Activated B cell treated with CpG ODN at 0.5 μM for 24 hours (primary cell): ENCODE measurements at regions of chr1 and their contacts with region 1.

Region 1: GRCh38 chr1:20493839-20494608 is 8.0 kb upstream of the CAMK2N1 start:
- DNase-seq: peak; percentile 79
- ATAC-seq: peak; percentile 96
- H3K4me3 Mint-ChIP-seq: no peak overlapping the region
- H3K27ac Mint-ChIP-seq: no peak overlapping the region
- H3K4me1 Mint-ChIP-seq: peaks cover 4% of the 10 kb centered on the region
- H3K27me3 Mint-ChIP-seq: peaks cover 4% of the 10 kb centered on the region
- CTCF ChIP-seq: peak; percentile 95

Region 2: GRCh38 chr1:18820791-18821641 is 1673.0 kb before region 1 on chr1:
- CTCF ChIA-PET with region 1: no interaction called
- POLR2A ChIA-PET with region 1: no interaction called
- intact Hi-C with region 1: no loop called
- DNase-seq: no peak
- ATAC-seq: no peak
- H3K4me3 Mint-ChIP-seq: no peak overlapping the region
- H3K27ac Mint-ChIP-seq: no peak overlapping the region
- H3K4me1 Mint-ChIP-seq: no peaks in the 10 kb centered on the region
- H3K27me3 Mint-ChIP-seq: peaks cover 43% of the 10 kb centered on the region
- CTCF ChIP-seq: no peak

Region 3: DNA sequence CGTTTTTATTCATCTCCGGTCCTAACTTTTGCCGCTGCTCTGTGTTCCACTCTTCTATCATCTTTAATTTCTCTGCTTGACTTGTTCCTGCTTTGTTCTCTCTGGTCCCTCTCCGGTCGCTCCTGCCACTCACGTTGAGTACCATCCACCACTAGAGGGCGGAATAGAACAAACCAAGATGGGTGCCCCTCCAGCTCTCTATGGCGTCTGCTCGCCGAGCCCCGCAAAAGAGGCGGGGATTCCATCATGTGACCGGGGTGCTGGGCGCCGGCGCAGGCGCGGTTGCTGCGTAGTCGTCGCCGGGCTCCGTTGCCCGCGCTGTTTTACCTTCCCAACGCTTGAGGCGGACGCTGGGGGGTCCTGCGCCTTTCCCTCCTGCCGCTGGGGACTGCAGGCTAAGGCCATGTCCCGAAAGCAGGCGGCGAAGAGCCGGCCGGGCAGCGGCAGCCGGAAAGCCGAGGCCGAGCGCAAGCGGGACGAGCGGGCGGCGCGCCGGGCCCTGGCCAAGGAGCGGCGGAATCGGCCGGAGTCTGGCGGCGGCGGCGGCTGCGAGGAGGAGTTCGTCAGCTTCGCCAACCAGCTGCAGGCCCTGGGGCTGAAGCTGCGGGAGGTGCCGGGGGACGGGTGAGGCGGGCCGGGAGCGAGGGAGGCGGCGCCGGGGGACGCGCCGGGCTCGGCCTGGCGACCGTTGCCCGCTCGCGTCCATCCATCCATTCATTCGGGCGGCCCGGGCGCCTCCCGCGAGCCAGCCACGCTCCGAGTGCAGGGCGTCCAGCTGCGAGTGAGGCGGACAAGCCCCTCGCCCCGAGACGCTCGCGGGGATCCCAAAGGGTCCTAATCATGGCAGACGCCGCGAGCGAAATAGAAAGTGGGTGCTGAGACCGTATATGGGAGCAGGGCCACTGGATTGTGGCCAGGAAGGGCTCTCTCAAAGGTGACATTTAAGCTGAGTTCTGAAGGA is 611.6 kb before region 1 on chr1 and contains the start of gene OTUD3:
- CTCF ChIA-PET with region 1: no interaction called
- POLR2A ChIA-PET with region 1: no interaction called
- intact Hi-C with region 1: loop called (anchors 10 kb)
- DNase-seq: peak; percentile 90
- ATAC-seq: peak; percentile 96
- H3K4me3 Mint-ChIP-seq: peak within 1 kb of the TSS; percentile 87
- H3K27ac Mint-ChIP-seq: peak within 1 kb of the TSS; percentile 84
- H3K4me1 Mint-ChIP-seq: peaks cover 30% of the 10 kb centered on the region
- H3K27me3 Mint-ChIP-seq: peaks cover 5% of the 10 kb centered on the region
- CTCF ChIP-seq: peak; percentile 64
- total RNA-seq, gene OTUD3: 13.2 and 14.2 TPM in 2 replicates

Region 4: GRCh38 chr1:19974822-19975416 is 519.1 kb before region 1 on chr1:
- CTCF ChIA-PET with region 1: no interaction called
- POLR2A ChIA-PET with region 1: no interaction called
- intact Hi-C with region 1: loop called (anchors 2 kb)
- DNase-seq: no peak
- ATAC-seq: peak; percentile 50
- H3K4me3 Mint-ChIP-seq: no peak overlapping the region
- H3K27ac Mint-ChIP-seq: no peak overlapping the region
- H3K4me1 Mint-ChIP-seq: peaks cover 3% of the 10 kb centered on the region
- H3K27me3 Mint-ChIP-seq: peaks cover 16% of the 10 kb centered on the region
- CTCF ChIP-seq: no peak

Region 5: DNA sequence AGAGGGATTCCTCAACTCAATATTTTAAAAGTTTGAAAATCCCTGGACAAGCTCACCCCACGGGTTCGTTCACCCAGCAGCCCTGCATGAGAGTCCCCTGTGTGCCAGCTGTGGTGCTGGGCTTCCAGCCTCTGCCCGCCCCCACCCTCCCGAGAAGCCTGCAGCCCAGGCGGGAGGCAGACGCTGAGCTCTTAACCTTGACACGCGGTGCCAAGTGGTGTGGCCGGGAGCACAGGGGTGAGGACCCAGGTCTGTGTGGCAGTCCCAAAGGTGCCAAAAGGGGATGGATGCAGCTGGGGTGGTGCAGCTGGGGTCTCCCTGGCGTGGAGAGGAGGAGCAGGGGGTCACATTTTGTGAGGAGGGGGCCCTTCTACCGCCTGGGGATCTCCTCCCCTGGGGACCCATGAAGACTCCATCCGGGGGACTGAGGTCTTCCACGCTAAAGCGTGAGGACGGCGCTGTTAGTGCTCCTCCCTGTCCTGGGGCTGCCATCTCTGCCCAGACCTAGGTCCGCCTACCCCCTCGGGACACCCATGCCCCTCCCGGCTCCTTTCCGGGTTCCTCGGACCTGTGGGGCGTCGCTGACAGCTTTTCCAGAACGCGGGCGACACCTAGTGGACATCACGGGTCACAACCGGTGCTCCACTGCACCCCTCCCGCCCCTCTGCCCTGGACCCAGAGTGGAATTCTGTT is 342.0 kb before region 1 on chr1:
- CTCF ChIA-PET with region 1: no interaction called
- POLR2A ChIA-PET with region 1: no interaction called
- intact Hi-C with region 1: loop called (anchors 1 kb)
- DNase-seq: peak; percentile 74
- ATAC-seq: peak; percentile 98
- H3K4me3 Mint-ChIP-seq: peak overlapping the region; percentile 80
- H3K27ac Mint-ChIP-seq: no peak overlapping the region
- H3K4me1 Mint-ChIP-seq: peaks cover 9% of the 10 kb centered on the region
- H3K27me3 Mint-ChIP-seq: no peaks in the 10 kb centered on the region
- CTCF ChIP-seq: peak; percentile 65

Region 6: GRCh38 chr1:20233394-20233793 is 260.6 kb before region 1 on chr1:
- CTCF ChIA-PET with region 1: interaction called, 3 read pairs
- POLR2A ChIA-PET with region 1: no interaction called
- intact Hi-C with region 1: loop called (anchors 5 kb)
- DNase-seq: no peak
- ATAC-seq: peak; percentile 31
- H3K4me3 Mint-ChIP-seq: no peak overlapping the region
- H3K27ac Mint-ChIP-seq: no peak overlapping the region
- H3K4me1 Mint-ChIP-seq: no peaks in the 10 kb centered on the region
- H3K27me3 Mint-ChIP-seq: peaks cover 48% of the 10 kb centered on the region
- CTCF ChIP-seq: no peak

Region 7: DNA sequence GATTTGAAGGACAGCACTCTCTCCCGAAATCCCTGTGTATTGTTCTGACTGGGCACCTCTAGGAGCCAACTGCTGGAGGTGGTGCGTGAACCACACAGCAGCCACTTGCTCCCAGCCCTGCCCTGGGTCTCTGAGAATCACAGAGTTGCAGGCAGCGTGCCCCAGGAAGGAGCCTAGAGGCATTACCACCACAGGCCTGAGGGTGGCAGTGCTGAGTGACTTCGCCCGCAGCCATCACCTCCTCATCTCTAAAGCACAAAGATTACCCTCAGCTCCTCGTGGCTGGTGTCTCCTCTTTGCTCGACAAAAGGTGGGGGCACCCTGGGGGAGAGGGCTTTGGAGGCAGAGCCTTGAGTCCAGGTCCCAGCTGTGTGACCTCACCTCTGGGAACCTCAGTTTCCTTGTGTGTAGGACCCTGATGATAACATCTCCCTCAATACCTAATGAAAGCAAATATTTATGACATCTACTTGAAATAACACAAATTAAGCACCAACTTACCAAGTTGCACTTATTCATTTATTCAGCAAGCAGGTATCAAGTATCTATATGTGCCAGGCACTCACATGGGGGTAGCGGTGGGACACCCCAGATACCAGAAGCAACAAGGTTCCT is 117.0 kb before region 1 on chr1:
- CTCF ChIA-PET with region 1: interaction called, 3 read pairs
- POLR2A ChIA-PET with region 1: no interaction called
- intact Hi-C with region 1: loop called (anchors 1 kb)
- DNase-seq: peak; percentile 39
- ATAC-seq: peak; percentile 70
- H3K4me3 Mint-ChIP-seq: no peak overlapping the region
- H3K27ac Mint-ChIP-seq: no peak overlapping the region
- H3K4me1 Mint-ChIP-seq: peaks cover 17% of the 10 kb centered on the region
- H3K27me3 Mint-ChIP-seq: peaks cover 17% of the 10 kb centered on the region
- CTCF ChIP-seq: no peak

Region 8: GRCh38 chr1:20625176-20626097 is 131.4 kb after region 1 on chr1:
- CTCF ChIA-PET with region 1: no interaction called
- POLR2A ChIA-PET with region 1: no interaction called
- intact Hi-C with region 1: no loop called
- DNase-seq: no peak
- ATAC-seq: no peak
- H3K4me3 Mint-ChIP-seq: no peak overlapping the region
- H3K27ac Mint-ChIP-seq: no peak overlapping the region
- H3K4me1 Mint-ChIP-seq: no peaks in the 10 kb centered on the region
- H3K27me3 Mint-ChIP-seq: peaks cover 18% of the 10 kb centered on the region
- CTCF ChIP-seq: no peak